ENCODE measurements at regions of chr11 and their contacts with region 1.

Region 1: DNA sequence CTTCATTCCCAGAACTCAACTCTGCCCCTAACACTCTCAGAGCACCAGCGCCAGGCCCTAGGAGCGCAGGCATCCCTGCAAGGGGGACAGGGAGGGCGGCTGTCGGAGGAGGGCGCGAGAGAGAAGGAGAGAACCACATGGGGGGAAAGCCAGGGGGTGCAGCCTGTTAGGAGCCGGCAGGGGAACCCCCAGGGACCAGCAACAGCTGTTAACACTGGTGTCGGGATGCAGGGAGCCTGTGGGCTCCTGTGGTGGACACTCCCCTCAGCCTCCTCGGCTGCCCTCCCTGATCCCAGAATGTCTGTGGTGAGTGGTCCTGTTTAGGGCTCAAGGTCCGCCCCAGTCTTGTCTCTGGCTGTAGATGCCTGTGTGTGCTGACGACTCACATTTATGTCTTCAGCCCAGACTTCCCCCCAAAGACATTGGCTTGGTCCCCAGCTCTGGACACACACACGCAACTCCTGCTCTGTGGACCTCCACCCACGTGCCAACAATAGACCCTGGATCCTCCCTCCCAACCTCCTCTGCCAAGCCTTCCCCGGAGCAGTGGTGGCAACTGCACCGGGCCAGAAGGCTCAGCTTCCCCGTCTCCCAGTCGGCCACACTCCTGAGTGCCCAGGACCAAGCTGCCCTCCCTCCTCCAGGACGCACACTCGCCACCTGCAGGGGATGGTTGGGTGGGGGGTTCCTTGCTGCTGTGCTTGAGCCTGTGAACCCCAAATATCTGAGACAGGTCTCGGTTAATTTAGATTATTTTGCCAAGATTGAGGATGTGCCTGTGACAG is 817 bp upstream of the IFITM5 start:
- DNase-seq: no peak
- H3K4me3 ChIP-seq: no peak overlapping the region
- H3K27ac ChIP-seq: no peak overlapping the region
- H3K4me1 ChIP-seq: no peaks in the 10 kb centered on the region
- H3K27me3 ChIP-seq: peaks cover 0 to 18% of the 10 kb centered on the region in 2 donors
- CTCF ChIP-seq: no peak
- POLR2A ChIP-seq: no peak

Region 2: DNA sequence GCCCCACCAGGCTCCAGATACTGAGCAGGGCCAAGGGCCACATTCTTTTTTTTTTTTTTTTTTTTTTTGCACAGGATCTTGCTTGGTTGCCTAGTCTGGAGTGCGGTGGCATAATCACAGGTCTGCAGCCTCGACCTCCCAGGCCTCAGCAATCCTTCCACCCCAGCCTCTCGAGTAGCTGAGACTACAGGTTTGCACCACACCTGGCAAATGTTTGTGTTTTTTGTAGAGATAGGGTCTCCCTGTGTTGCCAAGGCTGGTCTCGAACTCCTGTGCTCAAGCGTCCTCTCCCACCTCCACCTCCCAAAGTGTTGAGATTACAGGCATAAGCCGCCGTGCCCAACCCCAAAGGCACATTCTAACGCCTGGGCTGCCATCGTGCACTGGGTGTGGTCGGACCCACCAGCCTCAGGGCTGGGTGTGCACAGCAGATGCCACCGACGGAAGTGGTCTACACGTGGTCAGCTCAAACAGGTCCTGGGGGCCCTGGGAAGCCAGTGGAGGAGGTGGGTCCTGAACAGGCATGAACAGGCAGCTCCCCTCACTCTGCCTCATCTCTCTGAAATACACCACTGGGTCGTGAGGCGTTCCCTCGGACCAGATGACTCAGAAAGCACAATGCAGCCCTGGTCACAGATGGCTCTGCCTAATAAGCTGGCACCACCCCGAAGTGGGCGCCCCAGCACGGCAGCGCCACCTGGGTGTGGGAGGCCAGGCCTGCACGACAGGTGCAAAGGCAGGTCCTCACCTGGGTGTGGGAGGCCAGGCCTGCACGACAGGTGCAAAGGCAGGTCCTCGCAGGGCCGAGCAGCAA is 64.0 kb after region 1 on chr11:
- intact Hi-C with region 1: loop called (anchors 5 kb)
- DNase-seq: peak; percentile 71 to 79
- H3K4me3 ChIP-seq: peak overlapping the region in 1 of 3 donors; percentile 5
- H3K27ac ChIP-seq: no peak overlapping the region
- H3K4me1 ChIP-seq: peaks cover 0 to 4% of the 10 kb centered on the region in 2 donors
- H3K27me3 ChIP-seq: peaks cover 0 to 32% of the 10 kb centered on the region in 2 donors
- CTCF ChIP-seq: peak; percentile 58 to 72 (median 67)
- POLR2A ChIP-seq: no peak